ENCODE measurements at regions of chr4 and their contacts with region 1.

Region 1: GRCh38 chr4:41644288-41644914 is 104.1 kb downstream of the PHOX2B start:
- DNase-seq: peak in 1 of 2 donors; percentile 86
- H3K4me3 ChIP-seq: peak overlapping the region; percentile 34 to 50
- H3K27ac ChIP-seq: no peak overlapping the region
- H3K4me1 ChIP-seq: peaks cover 2 to 24% of the 10 kb centered on the region in 2 donors
- H3K27me3 ChIP-seq: no peaks in the 10 kb centered on the region
- CTCF ChIP-seq: peak; percentile 83 to 96 (median 89)

Region 2: DNA sequence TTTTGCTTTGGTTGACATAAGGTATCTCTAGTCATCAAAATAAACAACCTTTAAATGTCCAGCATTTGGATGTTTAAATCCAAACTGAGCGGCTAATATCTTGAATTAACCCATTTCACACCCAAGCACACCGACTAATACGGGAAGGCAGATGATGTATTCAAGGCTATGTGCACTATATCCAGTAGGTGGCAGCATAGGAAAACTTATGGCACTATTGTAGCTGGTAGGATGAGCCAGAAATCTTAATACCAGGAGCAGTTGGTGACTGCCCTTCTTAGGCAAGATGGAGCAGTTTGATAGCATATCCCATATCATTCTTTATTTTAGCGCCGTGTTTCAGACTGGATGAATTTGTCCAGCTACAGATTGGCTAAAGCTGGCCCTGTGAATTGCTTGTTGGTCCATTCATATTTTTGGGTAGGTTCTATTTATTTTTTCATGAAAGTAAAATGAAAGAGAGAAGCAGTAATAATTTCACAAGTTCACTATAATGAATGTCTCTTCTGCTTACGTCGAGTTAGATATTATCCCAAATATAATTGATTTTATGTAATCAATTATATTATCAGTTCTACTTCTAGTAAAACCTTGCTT is 363.3 kb before region 1 on chr4:
- intact Hi-C with region 1: loop called (anchors 5 kb)
- DNase-seq: peak in 1 of 2 donors; percentile 67
- H3K4me3 ChIP-seq: no peak overlapping the region
- H3K27ac ChIP-seq: no peak overlapping the region
- H3K4me1 ChIP-seq: no peaks in the 10 kb centered on the region
- H3K27me3 ChIP-seq: no peaks in the 10 kb centered on the region
- CTCF ChIP-seq: peak; percentile 81 to 87 (median 83)

Region 3: GRCh38 chr4:41339812-41340809 is 304.3 kb before region 1 on chr4:
- intact Hi-C with region 1: loop called (anchors 1 kb)
- DNase-seq: peak in 1 of 2 donors; percentile 70
- H3K4me3 ChIP-seq: no peak overlapping the region
- H3K27ac ChIP-seq: no peak overlapping the region
- H3K4me1 ChIP-seq: peaks cover 0 to 7% of the 10 kb centered on the region in 2 donors
- H3K27me3 ChIP-seq: no peaks in the 10 kb centered on the region
- CTCF ChIP-seq: peak; percentile 20 to 64 (median 42)

Region 4: DNA sequence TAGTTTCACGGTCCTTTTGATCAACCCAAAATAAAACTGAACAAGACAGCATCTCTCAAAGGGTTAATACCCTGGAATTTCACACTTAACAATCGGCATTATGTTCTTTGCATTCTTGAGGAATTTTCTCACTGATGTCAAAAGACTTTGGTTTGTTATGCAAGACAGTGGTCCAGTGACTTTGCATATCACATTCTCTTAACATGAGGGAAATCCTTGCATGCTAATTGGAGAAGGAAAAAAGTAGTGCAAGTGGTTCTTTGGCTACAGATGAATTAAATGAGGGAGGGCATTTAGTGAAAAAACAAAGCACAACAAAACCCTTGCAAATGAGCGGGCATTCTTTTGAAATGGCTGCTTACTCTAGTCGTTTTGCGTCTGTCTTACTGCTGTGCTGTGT is 211.5 kb before region 1 on chr4:
- intact Hi-C with region 1: loop called (anchors 5 kb)
- DNase-seq: no peak
- H3K4me3 ChIP-seq: no peak overlapping the region
- H3K27ac ChIP-seq: peak overlapping the region; percentile 67 to 78
- H3K4me1 ChIP-seq: peaks cover 16 to 54% of the 10 kb centered on the region in 2 donors
- H3K27me3 ChIP-seq: no peaks in the 10 kb centered on the region
- CTCF ChIP-seq: no peak

Region 5: DNA sequence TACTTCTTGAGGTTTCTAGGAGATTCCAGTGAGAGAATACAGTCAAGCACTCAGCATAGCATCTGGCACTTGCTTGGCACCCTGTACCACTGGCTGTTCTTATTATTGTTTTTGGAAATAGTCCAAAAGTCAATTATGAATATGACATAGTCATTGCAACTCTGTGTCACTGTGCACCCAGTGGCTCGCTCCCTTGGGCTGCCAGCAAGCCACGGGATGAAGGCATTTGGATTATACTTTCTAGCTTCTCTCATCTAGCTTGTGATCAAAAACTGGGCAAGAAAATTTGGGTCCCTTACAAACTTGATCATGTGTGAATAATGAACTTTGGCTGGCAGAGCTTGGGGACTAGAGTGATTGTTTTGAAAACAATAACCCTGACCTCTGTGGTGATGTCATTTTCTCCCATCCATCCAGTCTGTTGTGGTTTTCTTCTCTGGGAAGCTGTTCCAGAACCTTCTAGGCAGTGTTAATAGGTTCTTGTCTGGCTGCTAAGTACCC is 139.2 kb before region 1 on chr4:
- intact Hi-C with region 1: loop called (anchors 5 kb)
- DNase-seq: peak; percentile 21 to 86
- H3K4me3 ChIP-seq: no peak overlapping the region
- H3K27ac ChIP-seq: peak overlapping the region; percentile 71 to 75
- H3K4me1 ChIP-seq: peaks cover 3 to 36% of the 10 kb centered on the region in 2 donors
- H3K27me3 ChIP-seq: no peaks in the 10 kb centered on the region
- CTCF ChIP-seq: no peak

Region 6: DNA sequence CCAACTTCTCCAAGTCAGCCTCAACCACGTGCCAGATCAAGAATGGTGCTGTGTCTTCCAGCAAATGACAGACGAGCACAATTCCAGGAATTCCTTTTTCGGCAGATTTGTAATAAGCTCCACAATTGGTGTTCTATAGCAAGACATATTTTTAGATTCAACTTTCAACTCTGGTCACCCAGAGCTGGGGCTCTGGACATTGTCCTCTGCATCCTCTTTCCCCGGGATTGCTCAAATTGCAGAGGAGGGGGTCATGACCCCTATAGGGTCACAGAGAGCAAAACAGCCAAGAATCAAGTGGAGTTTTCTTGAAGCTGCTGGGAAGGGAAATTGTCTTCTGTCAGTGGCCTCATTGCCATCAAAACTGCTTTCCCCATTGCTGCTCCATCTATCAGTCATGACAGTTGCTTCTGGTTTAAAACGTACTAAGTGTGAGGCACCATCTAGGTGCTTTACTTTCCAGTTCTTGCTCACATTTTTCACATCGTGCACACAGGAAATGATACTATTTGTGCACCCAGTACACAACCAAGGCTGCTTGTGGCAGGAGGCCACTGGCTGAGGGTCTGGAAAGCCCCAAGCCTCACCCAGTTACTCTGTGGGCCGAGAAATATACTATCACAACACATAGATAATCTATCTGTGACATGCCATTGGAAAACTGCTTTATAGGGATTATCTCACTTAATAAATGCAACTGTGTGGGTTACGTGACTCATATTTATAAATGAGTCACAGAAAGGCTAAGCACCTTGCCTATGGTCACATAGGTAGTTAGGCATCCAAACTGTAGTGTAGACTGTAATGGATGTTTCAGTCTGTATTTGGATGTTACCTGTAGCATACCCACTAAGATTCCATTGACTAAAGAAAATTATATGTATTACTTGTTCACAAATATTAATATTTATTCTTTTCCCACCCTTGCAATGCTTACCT is 195.8 kb after region 1 on chr4:
- intact Hi-C with region 1: no loop called
- DNase-seq: no peak
- H3K4me3 ChIP-seq: no peak overlapping the region
- H3K27ac ChIP-seq: no peak overlapping the region
- H3K4me1 ChIP-seq: no peaks in the 10 kb centered on the region
- H3K27me3 ChIP-seq: no peaks in the 10 kb centered on the region
- CTCF ChIP-seq: no peak